ENCODE measurements at regions of chr2 and their contacts with region 1.

Region 1: GRCh38 chr2:55049043-55049793 is 1.0 kb downstream of the RTN4 start:
- DNase-seq: peak; percentile 89 to 95 (median 90)
- H3K4me3 ChIP-seq: peak overlapping the region; percentile 52 to 99 (median 86)
- H3K27ac ChIP-seq: peak overlapping the region; percentile 89 to 99 (median 98)
- H3K4me1 ChIP-seq: peaks cover 22 to 54% of the 10 kb centered on the region in 2 donors
- H3K27me3 ChIP-seq: no peaks in the 10 kb centered on the region
- CTCF ChIP-seq: peak; percentile 54 to 85 (median 75)
- POLR2A ChIP-seq: peak in 1 of 2 donors; percentile 75

Region 2: DNA sequence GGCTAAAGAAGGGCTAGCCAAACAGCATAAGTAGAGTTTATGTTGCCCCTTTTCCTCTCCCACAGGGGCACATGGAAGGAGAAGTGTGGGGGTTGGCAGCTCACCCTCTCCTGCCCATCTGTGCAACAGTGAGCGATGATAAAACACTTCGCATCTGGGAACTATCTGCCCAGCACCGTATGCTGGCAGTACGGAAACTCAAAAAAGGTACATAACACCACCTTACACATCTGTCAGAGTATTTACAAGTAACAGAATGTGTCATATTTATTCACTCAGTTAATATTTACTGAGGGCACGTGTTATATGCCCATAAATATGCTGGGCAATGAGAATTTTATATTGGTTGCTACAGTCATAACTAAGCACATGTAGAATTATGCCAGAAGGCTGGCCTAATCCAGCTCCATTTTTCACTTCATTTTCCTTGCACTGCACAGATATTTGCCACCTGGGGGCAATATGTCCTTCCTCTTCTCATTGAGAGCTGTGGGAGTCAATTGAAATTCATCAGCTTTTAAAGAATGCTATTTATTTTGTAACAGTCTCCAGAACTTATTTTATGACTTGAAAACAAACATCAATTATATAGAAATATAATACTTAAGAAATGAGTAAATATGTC is 149.5 kb before region 1 on chr2:
- intact Hi-C with region 1: loop called in 1 of 2 experiments (anchors 5 kb)
- DNase-seq: peak in 4 of 7 donors; percentile 19 to 57 (median 29)
- H3K4me3 ChIP-seq: no peak overlapping the region
- H3K27ac ChIP-seq: no peak overlapping the region
- H3K4me1 ChIP-seq: no peaks in the 10 kb centered on the region
- H3K27me3 ChIP-seq: no peaks in the 10 kb centered on the region
- CTCF ChIP-seq: peak; percentile 12 to 64 (median 54)
- POLR2A ChIP-seq: no peak

Region 3: DNA sequence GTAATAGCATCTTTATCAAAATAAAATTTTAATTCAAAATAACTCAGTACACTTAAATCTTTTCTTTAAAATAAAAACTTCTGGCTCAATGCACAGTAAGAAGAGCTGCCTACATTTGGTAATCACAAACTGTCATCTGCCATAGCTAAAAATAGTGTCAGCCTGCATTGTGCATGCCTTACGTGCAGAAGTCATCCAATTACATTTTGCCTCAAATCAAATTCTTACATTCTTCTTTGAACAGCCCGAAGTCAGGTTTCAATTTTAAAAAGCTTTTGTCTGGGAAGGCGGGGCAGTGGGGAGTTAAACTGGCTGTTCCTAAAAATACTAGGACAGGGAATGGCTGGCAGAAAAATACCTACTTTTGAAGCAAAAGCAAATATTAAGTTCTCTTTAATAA is 50.0 kb before region 1 on chr2:
- intact Hi-C with region 1: no loop called
- DNase-seq: peak in 5 of 7 donors; percentile 33 to 41 (median 37)
- H3K4me3 ChIP-seq: peak overlapping the region in 1 of 4 donors; percentile 16
- H3K27ac ChIP-seq: peak overlapping the region in 2 of 5 donors; percentile 36 to 62
- H3K4me1 ChIP-seq: peaks cover 12 to 45% of the 10 kb centered on the region in 2 donors
- H3K27me3 ChIP-seq: no peaks in the 10 kb centered on the region
- CTCF ChIP-seq: no peak
- POLR2A ChIP-seq: no peak

Region 4: GRCh38 chr2:55168221-55169154 is 119.3 kb after region 1 on chr2:
- intact Hi-C with region 1: loop called (anchors 5 to 10 kb)
- DNase-seq: peak; percentile 46 to 85 (median 64)
- H3K4me3 ChIP-seq: no peak overlapping the region
- H3K27ac ChIP-seq: peak overlapping the region in 1 of 5 donors; percentile 20
- H3K4me1 ChIP-seq: peaks cover 0 to 16% of the 10 kb centered on the region in 2 donors
- H3K27me3 ChIP-seq: no peaks in the 10 kb centered on the region
- CTCF ChIP-seq: peak; percentile 32 to 90 (median 84)
- POLR2A ChIP-seq: no peak

Region 5: GRCh38 chr2:55419679-55420438 is 370.6 kb after region 1 on chr2 and contains the start of gene CCDC88A:
- intact Hi-C with region 1: loop called in 1 of 2 experiments (anchors 10 kb)
- DNase-seq: peak; percentile 95 to 98 (median 97)
- H3K4me3 ChIP-seq: peak within 1 kb of the TSS; percentile 43 to 93 (median 87)
- H3K27ac ChIP-seq: peak within 1 kb of the TSS; percentile 59 to 95 (median 87)
- H3K4me1 ChIP-seq: peaks cover 5 to 35% of the 10 kb centered on the region in 2 donors
- H3K27me3 ChIP-seq: no peaks in the 10 kb centered on the region
- CTCF ChIP-seq: peak in 4 of 6 experiments; percentile 24 to 55 (median 39)
- POLR2A ChIP-seq: peak; percentile 92 to 96
- total RNA-seq, gene CCDC88A: 18.5 to 101 (median 46.9) TPM

Measured in adrenal gland (tissue), 19 donors.